ENCODE measurements at regions of chr7 and their contacts with region 1.

Region 1: GRCh38 chr7:142811154-142811737 is 40.5 kb downstream of the PRSS2 start:
- DNase-seq: peak; percentile 85
- H3K4me3 ChIP-seq: no peak overlapping the region
- H3K27ac ChIP-seq: peak overlapping the region; percentile 100
- H3K4me1 ChIP-seq: peaks cover 74% of the 10 kb centered on the region
- CTCF ChIP-seq: peak; percentile 89

Region 2: DNA sequence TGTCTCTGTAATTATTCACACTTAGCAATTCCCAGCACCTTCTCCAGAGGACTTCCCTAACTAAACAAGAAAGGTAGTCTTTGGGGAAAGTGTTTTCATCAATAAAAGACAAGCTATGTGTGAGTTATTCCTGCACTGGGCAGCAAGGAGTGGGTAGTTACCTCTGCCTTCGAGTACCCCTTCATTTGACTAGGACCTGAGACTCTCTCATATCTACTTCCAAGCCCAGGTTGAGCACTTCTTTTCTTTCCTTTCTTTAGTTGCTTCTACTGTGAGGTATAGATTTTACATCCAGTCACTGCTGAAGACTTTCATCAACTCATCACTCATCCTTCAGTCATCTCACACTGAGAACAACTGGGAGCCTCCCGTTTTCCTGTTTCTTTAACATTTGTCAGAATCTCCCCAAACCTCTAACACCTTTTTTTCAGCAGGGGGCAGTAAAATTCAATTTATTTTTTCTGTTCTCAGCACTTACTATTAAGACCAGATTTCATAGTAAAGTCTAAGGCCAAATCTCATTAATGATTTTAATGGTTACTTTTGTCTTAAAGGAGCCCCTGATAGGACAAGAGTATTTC is 142.1 kb before region 1 on chr7:
- CTCF ChIA-PET with region 1: interaction called, 4 read pairs
- POLR2A ChIA-PET with region 1: interaction called, 8 read pairs
- intact Hi-C with region 1: loop called (anchors 1 kb)
- DNase-seq: peak; percentile 48
- H3K4me3 ChIP-seq: no peak overlapping the region
- H3K27ac ChIP-seq: no peak overlapping the region
- H3K4me1 ChIP-seq: peaks cover 41% of the 10 kb centered on the region
- CTCF ChIP-seq: peak; percentile 88

Region 3: GRCh38 chr7:142733271-142733670 is 78.0 kb before region 1 on chr7:
- CTCF ChIA-PET with region 1: no interaction called
- POLR2A ChIA-PET with region 1: interaction called, 4 read pairs
- intact Hi-C with region 1: loop called (anchors 2 kb)
- DNase-seq: peak; percentile 33
- H3K4me3 ChIP-seq: no peak overlapping the region
- H3K27ac ChIP-seq: no peak overlapping the region
- H3K4me1 ChIP-seq: peaks cover 11% of the 10 kb centered on the region
- CTCF ChIP-seq: no peak

Region 4: GRCh38 chr7:142782922-142783900 is 28.0 kb before region 1 on chr7:
- CTCF ChIA-PET with region 1: interaction called, 67 read pairs
- POLR2A ChIA-PET with region 1: interaction called, 666 read pairs
- intact Hi-C with region 1: loop called (anchors 1 kb)
- DNase-seq: peak; percentile 96
- H3K4me3 ChIP-seq: peak overlapping the region; percentile 59
- H3K27ac ChIP-seq: peak overlapping the region; percentile 31
- H3K4me1 ChIP-seq: peaks cover 56% of the 10 kb centered on the region
- CTCF ChIP-seq: peak; percentile 99

Region 5: GRCh38 chr7:142822714-142823113 is 11.5 kb after region 1 on chr7:
- CTCF ChIA-PET with region 1: no interaction called
- POLR2A ChIA-PET with region 1: interaction called, 10 read pairs
- intact Hi-C with region 1: no loop called
- DNase-seq: no peak
- H3K4me3 ChIP-seq: no peak overlapping the region
- H3K27ac ChIP-seq: no peak overlapping the region
- H3K4me1 ChIP-seq: no peaks in the 10 kb centered on the region
- CTCF ChIP-seq: no peak

Region 6: DNA sequence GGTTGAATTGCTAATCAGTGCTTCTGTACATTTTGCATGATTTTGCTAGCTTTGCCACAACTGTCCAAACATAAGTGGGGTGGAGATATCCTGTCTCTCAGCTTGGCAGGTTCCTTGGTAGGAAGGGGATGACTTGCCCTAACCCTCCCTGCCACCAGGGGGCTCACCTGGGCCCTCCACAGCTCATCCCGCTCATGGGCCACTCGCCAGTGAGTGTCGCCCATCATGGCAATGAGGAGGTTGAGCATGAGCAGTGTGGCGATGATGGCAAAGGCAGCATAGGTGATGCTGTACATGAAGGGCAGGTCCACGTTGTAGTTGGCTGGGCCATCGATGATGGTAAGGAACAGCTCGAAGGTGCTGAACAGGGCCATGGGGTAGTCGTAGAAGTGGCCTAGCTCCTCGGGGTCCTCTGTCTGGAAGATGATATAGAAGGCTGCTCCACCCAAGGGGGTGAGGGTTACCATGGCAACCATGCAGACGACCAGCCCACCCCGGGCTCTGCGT is 62.1 kb after region 1 on chr7:
- CTCF ChIA-PET with region 1: no interaction called
- POLR2A ChIA-PET with region 1: no interaction called
- intact Hi-C with region 1: no loop called
- DNase-seq: peak; percentile 36
- H3K4me3 ChIP-seq: no peak overlapping the region
- H3K27ac ChIP-seq: no peak overlapping the region
- H3K4me1 ChIP-seq: no peaks in the 10 kb centered on the region
- CTCF ChIP-seq: peak; percentile 82